ENCODE measurements at regions of chr4 and their contacts with region 1.

Region 1: DNA sequence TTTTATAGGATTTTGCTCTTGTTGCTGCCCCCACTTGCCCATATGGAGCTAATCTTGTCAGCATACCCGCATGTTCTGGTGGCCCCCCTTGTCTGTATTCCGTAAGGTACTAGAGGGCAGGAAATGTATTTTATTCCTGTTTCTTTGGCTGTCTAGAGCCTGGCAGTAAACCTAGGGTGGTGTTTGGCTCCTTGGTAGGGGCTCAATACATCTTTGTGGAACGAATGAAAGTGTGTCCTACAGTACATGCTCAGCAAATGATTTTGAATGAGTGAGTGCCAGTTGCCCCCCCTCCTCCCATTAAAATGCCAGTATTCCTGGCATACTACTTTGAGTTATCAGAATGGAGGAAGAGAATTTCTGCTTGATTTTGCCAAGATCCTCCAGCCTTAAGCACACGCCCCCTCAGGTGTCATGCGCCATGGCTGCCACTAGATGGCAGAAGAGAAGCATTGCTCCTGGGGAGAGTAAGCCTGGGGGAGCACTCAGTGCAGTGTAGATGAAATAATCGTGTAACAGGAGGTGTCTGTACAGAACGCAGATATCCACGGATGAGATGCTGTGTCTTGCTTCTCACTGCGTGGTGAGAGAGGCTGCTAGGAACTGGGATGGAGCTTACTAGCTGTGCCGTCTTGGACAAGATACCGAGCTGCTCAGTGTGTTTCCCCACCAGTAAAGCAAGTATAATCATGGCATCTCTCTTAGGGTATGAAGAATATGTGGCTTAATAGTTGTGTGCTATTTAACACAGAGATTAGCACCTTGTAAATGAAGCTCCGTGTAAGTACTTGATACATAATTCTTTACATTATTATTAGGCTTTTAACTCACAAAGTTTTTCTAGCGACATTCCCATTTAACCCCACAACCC is 17.2 kb upstream of the RNF212 start:
- DNase-seq: peak; percentile 57 to 90 (median 70)
- ATAC-seq: peak; percentile 97 to 100 (median 99)
- H3K4me3 ChIP-seq: no peak overlapping the region
- H3K4me3 Mint-ChIP-seq: no peak overlapping the region
- H3K27ac ChIP-seq: no peak overlapping the region
- H3K27ac Mint-ChIP-seq: no peak overlapping the region
- H3K4me1 ChIP-seq: peaks cover 0 to 4% of the 10 kb centered on the region in 2 experiments
- H3K4me1 Mint-ChIP-seq: peaks cover 0 to 3% (median 3%) of the 10 kb centered on the region in 3 donors
- H3K27me3 ChIP-seq: no peaks in the 10 kb centered on the region
- H3K27me3 Mint-ChIP-seq: peaks cover 0 to 6% of the 10 kb centered on the region in 2 donors

Region 2: GRCh38 chr4:1026115-1026514 is 104.4 kb before region 1 on chr4:
- CTCF ChIA-PET with region 1: no interaction called
- POLR2A ChIA-PET with region 1: no interaction called
- DNase-seq: peak in 14 of 35 experiments; percentile 8 to 60 (median 21)
- ATAC-seq: peak in 3 of 4 experiments; percentile 28 to 76 (median 44)
- H3K4me3 ChIP-seq: no peak overlapping the region
- H3K4me3 Mint-ChIP-seq: no peak overlapping the region
- H3K27ac ChIP-seq: no peak overlapping the region
- H3K27ac Mint-ChIP-seq: no peak overlapping the region
- H3K4me1 ChIP-seq: peaks cover 0 to 10% of the 10 kb centered on the region in 2 experiments
- H3K4me1 Mint-ChIP-seq: peaks cover 4 to 13% (median 10%) of the 10 kb centered on the region in 3 donors
- H3K27me3 ChIP-seq: peaks cover 0 to 20% of the 10 kb centered on the region in 2 experiments
- H3K27me3 Mint-ChIP-seq: no peaks in the 10 kb centered on the region

Region 3: GRCh38 chr4:1239141-1239949 is 108.8 kb after region 1 on chr4:
- CTCF ChIA-PET with region 1: no interaction called
- POLR2A ChIA-PET with region 1: no interaction called
- DNase-seq: no peak
- ATAC-seq: peak in 2 of 4 experiments; percentile 4 to 19
- H3K4me3 ChIP-seq: no peak overlapping the region
- H3K4me3 Mint-ChIP-seq: no peak overlapping the region
- H3K27ac ChIP-seq: no peak overlapping the region
- H3K27ac Mint-ChIP-seq: no peak overlapping the region
- H3K4me1 ChIP-seq: peaks cover 0 to 30% of the 10 kb centered on the region in 2 experiments
- H3K4me1 Mint-ChIP-seq: peaks cover 27 to 37% (median 33%) of the 10 kb centered on the region in 3 donors
- H3K27me3 ChIP-seq: no peaks in the 10 kb centered on the region
- H3K27me3 Mint-ChIP-seq: no peaks in the 10 kb centered on the region

Region 4: GRCh38 chr4:1346781-1347409 is 216.3 kb after region 1 on chr4 and contains the start of gene UVSSA:
- CTCF ChIA-PET with region 1: interaction called, 3 to 11 read pairs
- POLR2A ChIA-PET with region 1: no interaction called
- DNase-seq: peak; percentile 99 to 100 (median 100)
- ATAC-seq: peak; percentile 91 to 93 (median 92)
- H3K4me3 ChIP-seq: peak within 1 kb of the TSS; percentile 74 to 75
- H3K4me3 Mint-ChIP-seq: peak within 1 kb of the TSS; percentile 86 to 92 (median 88)
- H3K27ac ChIP-seq: peak within 1 kb of the TSS; percentile 91
- H3K27ac Mint-ChIP-seq: peak within 1 kb of the TSS; percentile 92 to 94
- H3K4me1 ChIP-seq: peaks cover 0 to 47% of the 10 kb centered on the region in 2 experiments
- H3K4me1 Mint-ChIP-seq: peaks cover 38 to 47% (median 45%) of the 10 kb centered on the region in 3 donors
- H3K27me3 ChIP-seq: no peaks in the 10 kb centered on the region
- H3K27me3 Mint-ChIP-seq: no peaks in the 10 kb centered on the region
- total RNA-seq, gene UVSSA: 39.9 to 53.7 (median 42.7) TPM

Measured in T-cell (primary cell).